ENCODE measurements at regions of chr6 and their contacts with region 1.

Region 1: GRCh38 chr6:47134476-47135189 is 92.5 kb upstream of the ADGRF1 start:
- DNase-seq: peak; percentile 99
- ATAC-seq: peak; percentile 72
- H3K4me3 ChIP-seq: peak overlapping the region; percentile 39
- H3K27ac ChIP-seq: peak overlapping the region; percentile 96
- H3K4me1 ChIP-seq: peaks cover 32% of the 10 kb centered on the region
- H3K27me3 ChIP-seq: no peaks in the 10 kb centered on the region
- CTCF ChIP-seq: no peak

Region 2: DNA sequence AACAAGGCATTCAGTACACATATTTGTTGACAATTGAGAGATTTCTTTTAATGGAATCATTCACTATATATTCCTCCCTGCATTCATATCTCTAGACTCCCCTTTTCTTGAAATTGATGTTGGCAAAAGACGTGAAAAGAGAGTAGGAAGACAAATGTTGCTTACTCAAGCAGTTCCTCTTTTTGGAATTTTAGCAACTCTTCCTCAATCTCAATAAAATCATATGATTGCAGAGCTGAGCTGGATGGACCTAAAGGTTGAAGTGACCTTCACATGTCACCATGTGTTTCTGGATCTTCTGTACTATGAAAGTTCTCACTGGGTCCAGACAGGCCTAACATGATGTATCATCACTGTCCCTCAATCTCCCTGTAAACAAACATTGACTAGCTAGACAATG is 111.1 kb before region 1 on chr6:
- CTCF ChIA-PET with region 1: no interaction called
- POLR2A ChIA-PET with region 1: no interaction called
- intact Hi-C with region 1: no loop called
- DNase-seq: no peak
- ATAC-seq: no peak
- H3K4me3 ChIP-seq: no peak overlapping the region
- H3K27ac ChIP-seq: no peak overlapping the region
- H3K4me1 ChIP-seq: no peaks in the 10 kb centered on the region
- H3K27me3 ChIP-seq: no peaks in the 10 kb centered on the region
- CTCF ChIP-seq: no peak

Region 3: GRCh38 chr6:47161176-47161687 is 26.6 kb after region 1 on chr6:
- CTCF ChIA-PET with region 1: interaction called, 3 read pairs
- POLR2A ChIA-PET with region 1: no interaction called
- intact Hi-C with region 1: loop called (anchors 1 kb)
- DNase-seq: peak; percentile 96
- ATAC-seq: peak; percentile 99
- H3K4me3 ChIP-seq: no peak overlapping the region
- H3K27ac ChIP-seq: peak overlapping the region; percentile 77
- H3K4me1 ChIP-seq: peaks cover 37% of the 10 kb centered on the region
- H3K27me3 ChIP-seq: no peaks in the 10 kb centered on the region
- CTCF ChIP-seq: no peak

Region 4: GRCh38 chr6:47180633-47181032 is 46.0 kb after region 1 on chr6:
- CTCF ChIA-PET with region 1: no interaction called
- POLR2A ChIA-PET with region 1: no interaction called
- intact Hi-C with region 1: loop called (anchors 2 kb)
- DNase-seq: peak; percentile 95
- ATAC-seq: peak; percentile 98
- H3K4me3 ChIP-seq: no peak overlapping the region
- H3K27ac ChIP-seq: peak overlapping the region; percentile 70
- H3K4me1 ChIP-seq: peaks cover 44% of the 10 kb centered on the region
- H3K27me3 ChIP-seq: no peaks in the 10 kb centered on the region
- CTCF ChIP-seq: no peak; the same call in 1 of the 2 replicates

Region 5: DNA sequence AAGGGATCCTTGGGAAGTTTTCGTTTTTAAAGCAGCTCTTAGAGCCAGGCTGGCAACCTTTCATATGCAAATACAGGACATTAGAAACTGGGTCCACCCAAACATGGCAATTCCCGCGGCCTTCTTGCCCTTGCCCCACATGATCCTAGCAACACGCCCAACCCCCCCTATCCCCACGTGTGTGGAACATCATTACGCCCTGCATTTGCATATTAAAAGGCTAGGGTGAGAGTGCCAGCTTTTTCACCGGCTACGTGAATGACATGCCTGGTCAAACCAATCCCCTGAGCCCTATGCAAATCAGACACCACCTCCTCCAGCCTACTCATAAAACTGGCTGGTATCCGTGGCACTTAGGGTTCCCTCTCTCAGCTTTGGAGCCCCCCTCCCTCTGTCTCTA is 86.9 kb after region 1 on chr6:
- CTCF ChIA-PET with region 1: no interaction called
- POLR2A ChIA-PET with region 1: no interaction called
- intact Hi-C with region 1: loop called (anchors 5 kb)
- DNase-seq: no peak
- ATAC-seq: no peak
- H3K4me3 ChIP-seq: no peak overlapping the region
- H3K27ac ChIP-seq: no peak overlapping the region
- H3K4me1 ChIP-seq: no peaks in the 10 kb centered on the region
- H3K27me3 ChIP-seq: no peaks in the 10 kb centered on the region
- CTCF ChIP-seq: no peak